Mucosa of descending colon (tissue), 3 donors: ENCODE measurements at regions of chr20 and their contacts with region 1.

Region 1: DNA sequence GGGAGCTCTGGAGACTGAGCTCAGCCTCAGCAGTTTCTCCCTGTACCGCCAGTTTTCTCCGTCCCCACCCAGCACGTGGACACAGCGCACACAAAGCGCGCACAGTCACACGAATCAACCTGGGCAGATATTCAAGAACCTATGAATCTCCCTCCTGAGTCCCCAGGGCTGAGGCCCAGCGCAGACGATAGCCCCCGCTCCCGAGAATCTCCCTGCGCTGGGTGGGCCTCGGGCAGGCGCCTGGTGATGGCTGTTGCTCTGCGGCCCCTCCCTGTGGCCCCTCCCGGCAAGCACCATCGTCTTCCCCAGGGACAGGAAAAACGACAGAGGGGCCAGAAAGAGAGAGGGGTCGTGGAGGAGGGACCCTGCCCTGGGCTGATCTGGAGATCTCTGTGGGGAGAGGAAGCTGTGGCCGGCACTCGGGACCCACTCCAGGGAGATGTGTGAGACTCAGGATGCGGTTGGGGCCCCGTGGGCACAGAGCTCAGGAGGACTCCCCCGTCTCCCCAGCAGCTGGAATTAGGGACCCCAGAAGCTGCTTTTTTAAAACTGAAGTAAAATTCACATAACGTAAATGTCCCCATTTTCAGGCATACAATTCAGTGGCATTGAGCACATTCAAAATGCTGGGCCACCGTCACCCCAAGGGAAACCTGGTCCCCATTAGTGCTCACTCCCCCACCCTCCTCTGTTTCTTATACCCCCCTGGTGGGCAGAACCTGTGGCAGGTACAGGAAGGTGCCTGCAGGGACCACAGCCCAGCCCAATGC is 330.8 kb downstream of the TAF4 start:
- DNase-seq: no peak
- ATAC-seq: no peak
- H3K4me3 ChIP-seq: no peak overlapping the region
- H3K4me1 ChIP-seq: no peaks in the 10 kb centered on the region
- CTCF ChIP-seq: no peak

Region 2: GRCh38 chr20:61901392-61902220 is 166.7 kb after region 1 on chr20:
- intact Hi-C with region 1: loop called in 1 of 2 experiments (anchors 5 kb)
- DNase-seq: peak in 1 of 3 donors; percentile 42
- ATAC-seq: peak; percentile 52
- H3K4me3 ChIP-seq: no peak overlapping the region
- H3K4me1 ChIP-seq: no peaks in the 10 kb centered on the region
- CTCF ChIP-seq: no peak